ENCODE measurements at regions of chr19 and their contacts with region 1.

Region 1: GRCh38 chr19:20923077-20923871 is at the start of gene ZNF85:
- DNase-seq: peak; percentile 69 to 95 (median 92)
- ATAC-seq: peak; percentile 99
- H3K4me3 ChIP-seq: peak within 1 kb of the TSS; percentile 66
- H3K4me3 Mint-ChIP-seq: peak within 1 kb of the TSS; percentile 92 to 98 (median 95)
- H3K27ac ChIP-seq: peak within 1 kb of the TSS; percentile 63
- H3K27ac Mint-ChIP-seq: peak within 1 kb of the TSS; percentile 87 to 98 (median 93)
- H3K4me1 ChIP-seq: peaks cover 0 to 4% of the 10 kb centered on the region in 2 donors
- H3K4me1 Mint-ChIP-seq: peaks cover 4 to 28% (median 14%) of the 10 kb centered on the region in 7 donors
- H3K27me3 ChIP-seq: no peaks in the 10 kb centered on the region
- H3K27me3 Mint-ChIP-seq: no peaks in the 10 kb centered on the region
- total RNA-seq, gene ZNF85: 4.3 to 10.4 (median 7.3) TPM

Region 2: DNA sequence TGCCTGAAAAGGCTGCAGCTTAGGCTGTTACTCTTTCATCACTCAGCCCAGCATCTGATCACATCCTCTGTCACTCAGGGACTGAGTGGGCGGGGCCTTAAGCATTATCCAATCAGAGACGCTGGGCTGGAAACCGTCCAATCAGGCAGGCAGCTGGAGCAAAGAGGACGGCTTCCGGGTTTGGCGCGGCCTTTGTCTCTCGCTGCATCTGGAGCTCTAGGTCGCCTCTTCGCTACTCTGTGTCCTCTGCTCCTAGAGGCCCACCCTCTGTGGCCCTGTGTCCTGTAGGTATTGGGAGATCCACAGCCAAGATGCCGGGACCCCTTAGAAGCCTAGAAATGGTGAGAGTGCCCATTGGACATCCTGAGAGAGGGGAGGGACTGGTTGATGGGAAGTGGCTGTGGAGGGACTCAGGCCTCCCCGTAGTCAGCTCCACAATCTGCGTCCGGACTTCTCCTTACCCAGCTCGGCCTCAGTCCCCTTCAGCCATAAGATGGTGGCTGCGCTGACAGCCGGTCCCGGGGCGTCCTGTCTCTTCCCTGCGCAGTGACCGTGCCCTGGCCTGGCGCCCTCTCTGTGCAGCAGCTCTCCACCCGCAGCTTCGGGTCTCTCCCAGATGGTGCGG is 756.1 kb before region 1 on chr19 and contains the start of gene ZNF486:
- CTCF ChIA-PET with region 1: no interaction called
- POLR2A ChIA-PET with region 1: no interaction called
- intact Hi-C with region 1: loop called in 1 of 2 experiments (anchors 5 kb)
- DNase-seq: peak; percentile 73 to 94 (median 90)
- ATAC-seq: peak; percentile 99
- H3K4me3 ChIP-seq: peak within 1 kb of the TSS; percentile 85
- H3K4me3 Mint-ChIP-seq: peak within 1 kb of the TSS; percentile 90 to 99 (median 95)
- H3K27ac ChIP-seq: peak within 1 kb of the TSS; percentile 76
- H3K27ac Mint-ChIP-seq: peak within 1 kb of the TSS; percentile 83 to 98 (median 90)
- H3K4me1 ChIP-seq: peaks cover 9 to 13% of the 10 kb centered on the region in 2 donors
- H3K4me1 Mint-ChIP-seq: peaks cover 13 to 42% (median 36%) of the 10 kb centered on the region in 7 donors
- H3K27me3 ChIP-seq: no peaks in the 10 kb centered on the region
- H3K27me3 Mint-ChIP-seq: no peaks in the 10 kb centered on the region
- total RNA-seq, gene ZNF486: 3.3 to 10.3 (median 4.8) TPM

Region 3: DNA sequence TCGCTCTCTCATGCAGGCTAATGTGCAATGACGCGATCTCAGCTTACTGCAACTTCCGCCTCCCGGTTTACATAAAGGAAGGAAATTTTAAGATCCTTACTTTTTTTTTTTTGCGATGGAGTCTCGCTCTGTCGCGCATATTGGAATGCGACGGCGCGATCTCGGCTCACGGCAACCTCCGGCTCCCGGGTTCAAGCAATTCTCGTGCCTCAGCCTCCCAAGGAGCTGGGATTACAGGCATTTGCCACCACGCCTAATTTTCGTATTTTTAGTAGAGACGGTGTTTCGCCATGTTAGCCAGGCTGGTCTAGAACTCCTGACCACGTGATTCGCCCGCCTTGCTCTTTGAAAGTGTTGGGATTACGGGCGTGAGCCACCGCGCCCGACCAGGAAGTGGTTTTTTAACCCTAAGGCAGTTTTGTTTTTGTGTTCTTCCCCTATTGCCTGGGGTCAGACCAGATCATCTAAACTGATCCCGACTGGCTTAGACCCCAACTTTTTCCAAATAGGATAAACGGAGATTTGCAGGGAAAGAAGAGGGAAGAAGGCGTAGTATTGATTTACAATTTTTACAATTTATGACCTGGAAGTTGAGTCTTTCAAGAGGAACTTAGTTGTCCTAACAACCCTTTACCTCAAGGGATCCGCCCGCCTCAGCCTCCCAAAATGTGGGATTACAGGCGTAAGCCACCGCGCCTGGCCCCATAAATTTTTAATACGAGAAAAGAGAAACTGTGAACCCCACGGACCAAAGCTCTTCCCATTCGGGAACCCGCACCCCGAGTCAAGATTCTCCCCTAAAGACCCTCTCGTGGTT is 499.7 kb before region 1 on chr19:
- CTCF ChIA-PET with region 1: no interaction called
- POLR2A ChIA-PET with region 1: interaction called, 3 read pairs
- intact Hi-C with region 1: loop called in 1 of 2 experiments (anchors 1 kb)
- DNase-seq: peak in 7 of 9 donors; percentile 17 to 30 (median 24)
- ATAC-seq: no peak
- H3K4me3 ChIP-seq: peak overlapping the region; percentile 91
- H3K4me3 Mint-ChIP-seq: peak overlapping the region; percentile 89 to 98 (median 93)
- H3K27ac ChIP-seq: peak overlapping the region; percentile 72
- H3K27ac Mint-ChIP-seq: peak overlapping the region; percentile 51 to 96 (median 89)
- H3K4me1 ChIP-seq: peaks cover 0 to 3% of the 10 kb centered on the region in 2 donors
- H3K4me1 Mint-ChIP-seq: peaks cover 4 to 29% (median 16%) of the 10 kb centered on the region in 7 donors
- H3K27me3 ChIP-seq: no peaks in the 10 kb centered on the region
- H3K27me3 Mint-ChIP-seq: no peaks in the 10 kb centered on the region

Region 4: DNA sequence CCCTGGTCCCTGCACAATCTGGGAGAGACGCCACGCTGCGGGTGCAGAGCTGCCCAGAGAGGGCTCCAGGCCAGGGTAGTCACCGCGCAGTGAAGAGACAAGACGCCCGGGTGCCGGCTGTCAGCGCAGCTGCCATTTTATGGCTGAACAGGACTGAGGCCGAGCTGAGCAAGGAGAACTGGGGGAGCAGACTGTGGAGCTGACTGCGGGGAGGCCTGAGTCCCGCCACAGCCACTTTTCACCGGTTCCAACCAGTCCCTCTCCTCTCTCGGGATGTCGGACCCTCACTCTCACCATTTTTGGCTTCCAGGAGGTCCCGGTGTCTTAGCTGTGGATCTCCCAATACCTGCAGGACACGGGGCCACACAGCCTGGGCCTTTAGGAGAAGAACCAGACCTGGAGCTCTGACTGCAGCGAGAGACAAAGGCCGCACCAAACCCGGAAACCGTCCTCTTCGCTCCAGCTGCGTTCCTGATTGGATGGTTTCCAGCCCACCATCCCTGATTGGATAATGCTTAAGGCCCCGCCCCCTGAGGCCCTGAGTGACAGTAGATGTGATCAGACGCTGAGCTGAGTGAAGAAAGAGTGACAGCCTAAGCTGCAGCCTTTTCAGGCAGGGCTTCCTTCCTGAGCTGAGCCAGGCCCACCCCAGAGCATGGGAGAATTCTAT is 262.0 kb before region 1 on chr19 and contains the start of gene ZNF626:
- CTCF ChIA-PET with region 1: no interaction called
- POLR2A ChIA-PET with region 1: interaction called, 8 read pairs
- intact Hi-C with region 1: loop called in 1 of 2 experiments (anchors 1 kb)
- DNase-seq: peak; percentile 66 to 92 (median 87)
- ATAC-seq: peak; percentile 99
- H3K4me3 ChIP-seq: peak within 1 kb of the TSS; percentile 89
- H3K4me3 Mint-ChIP-seq: peak within 1 kb of the TSS; percentile 83 to 97 (median 92)
- H3K27ac ChIP-seq: peak within 1 kb of the TSS; percentile 91
- H3K27ac Mint-ChIP-seq: peak within 1 kb of the TSS; percentile 86 to 97 (median 95)
- H3K4me1 ChIP-seq: peaks cover 0 to 6% of the 10 kb centered on the region in 2 donors
- H3K4me1 Mint-ChIP-seq: peaks cover 0 to 54% (median 47%) of the 10 kb centered on the region in 7 donors
- H3K27me3 ChIP-seq: no peaks in the 10 kb centered on the region
- H3K27me3 Mint-ChIP-seq: no peaks in the 10 kb centered on the region
- total RNA-seq, gene ZNF626: 2.2 to 20.0 (median 12.4) TPM

Region 5: DNA sequence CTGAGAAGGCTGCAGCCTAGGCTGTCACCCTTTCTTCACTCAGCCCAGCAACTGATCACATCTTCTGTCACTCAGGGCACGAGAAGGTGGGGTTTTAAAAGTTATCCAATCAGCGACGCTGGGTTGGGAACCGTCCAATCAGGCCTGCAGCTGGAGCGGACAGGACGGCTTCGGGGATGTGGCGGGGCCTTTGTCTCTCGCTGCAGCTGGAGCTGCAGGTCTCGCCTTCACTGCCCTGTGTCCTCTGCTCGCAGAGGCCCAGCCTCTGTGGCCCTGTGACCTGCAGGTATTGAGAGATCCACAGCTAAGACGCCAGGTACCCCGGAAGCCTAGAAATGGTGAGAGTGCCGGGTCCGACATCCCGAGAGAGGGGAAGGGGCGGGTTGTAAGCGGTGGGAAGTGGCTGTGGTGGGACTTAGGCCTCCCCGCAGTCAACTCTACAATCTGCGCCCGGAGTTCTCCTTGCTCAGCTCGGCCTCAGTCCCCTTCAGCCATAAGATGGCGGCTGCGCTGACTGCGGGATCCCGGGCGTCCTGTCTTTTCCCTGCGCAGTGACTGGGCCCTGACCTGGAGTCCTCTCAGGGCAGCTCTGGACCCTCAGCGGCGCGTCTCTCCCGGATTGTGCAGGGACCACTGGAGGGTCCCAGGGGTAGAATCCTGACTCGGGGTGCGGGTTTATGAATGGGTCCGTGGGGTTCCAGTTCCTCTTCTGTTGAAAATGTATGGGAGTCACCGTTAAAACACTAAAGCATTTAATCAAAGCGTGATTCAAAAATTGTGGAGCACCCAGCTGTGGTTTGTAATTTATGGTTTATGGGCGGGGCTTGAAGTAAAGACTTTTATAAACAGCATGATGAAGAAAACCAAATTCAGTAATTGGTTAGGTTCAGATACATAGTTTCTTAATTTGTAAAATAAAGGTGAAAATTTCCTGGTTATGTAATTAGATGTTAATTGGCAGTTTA is 159.0 kb after region 1 on chr19 and contains the start of gene ZNF714:
- CTCF ChIA-PET with region 1: no interaction called
- POLR2A ChIA-PET with region 1: interaction called, 6 read pairs
- intact Hi-C with region 1: loop called (anchors 1 to 5 kb)
- DNase-seq: peak; percentile 55 to 90 (median 80)
- ATAC-seq: peak; percentile 100
- H3K4me3 ChIP-seq: peak within 1 kb of the TSS; percentile 92
- H3K4me3 Mint-ChIP-seq: peak within 1 kb of the TSS; percentile 91 to 100 (median 99)
- H3K27ac ChIP-seq: peak within 1 kb of the TSS; percentile 74
- H3K27ac Mint-ChIP-seq: peak within 1 kb of the TSS; percentile 85 to 99 (median 95)
- H3K4me1 ChIP-seq: no peaks in the 10 kb centered on the region
- H3K4me1 Mint-ChIP-seq: peaks cover 3 to 24% (median 18%) of the 10 kb centered on the region in 7 donors
- H3K27me3 ChIP-seq: no peaks in the 10 kb centered on the region
- H3K27me3 Mint-ChIP-seq: no peaks in the 10 kb centered on the region
- total RNA-seq, gene ZNF714: 7.4 to 22.3 (median 13.3) TPM

Region 6: DNA sequence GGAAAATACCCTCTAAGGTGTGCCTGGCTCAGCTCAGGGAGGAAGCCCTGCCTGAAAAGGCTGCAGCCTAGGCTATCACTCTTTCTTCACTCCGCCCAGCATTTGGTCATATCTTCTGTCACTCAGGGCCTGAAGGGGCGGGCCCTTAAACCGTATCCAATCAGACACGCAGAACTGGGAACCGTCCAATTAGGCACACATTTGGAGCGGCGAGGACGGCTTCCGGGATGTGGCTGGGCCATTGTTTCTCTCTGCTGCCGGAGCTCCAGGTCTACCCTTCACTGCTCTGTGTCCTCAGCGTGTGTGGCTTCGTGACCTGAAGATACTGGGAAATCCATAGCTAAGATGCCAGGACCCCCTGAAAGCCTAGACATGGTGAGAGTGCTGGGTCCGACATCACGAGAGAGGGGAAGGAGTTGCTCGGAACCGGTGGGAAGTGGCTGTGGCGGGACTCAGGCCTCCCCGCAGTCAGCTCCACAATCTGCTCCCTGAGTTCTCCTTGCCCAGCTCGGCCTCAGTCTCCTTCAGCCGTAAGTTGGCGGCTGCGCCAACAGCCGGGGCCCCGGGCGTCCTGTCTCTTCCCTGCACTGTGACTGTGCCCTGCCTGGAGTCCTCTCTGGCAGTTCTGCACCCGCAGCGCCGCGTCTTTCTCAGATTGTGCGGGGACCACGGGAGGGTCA is 473.8 kb after region 1 on chr19 and contains the start of gene ZNF493:
- CTCF ChIA-PET with region 1: no interaction called
- POLR2A ChIA-PET with region 1: no interaction called
- intact Hi-C with region 1: loop called in 1 of 2 experiments (anchors 1 kb)
- DNase-seq: peak; percentile 76 to 95 (median 91)
- ATAC-seq: peak; percentile 100
- H3K4me3 ChIP-seq: peak within 1 kb of the TSS; percentile 80
- H3K4me3 Mint-ChIP-seq: peak within 1 kb of the TSS; percentile 90 to 99 (median 97)
- H3K27ac ChIP-seq: peak within 1 kb of the TSS; percentile 77
- H3K27ac Mint-ChIP-seq: peak within 1 kb of the TSS; percentile 68 to 97 (median 92)
- H3K4me1 ChIP-seq: peaks cover 6 to 11% of the 10 kb centered on the region in 2 donors
- H3K4me1 Mint-ChIP-seq: peaks cover 19 to 48% (median 32%) of the 10 kb centered on the region in 7 donors
- H3K27me3 ChIP-seq: no peaks in the 10 kb centered on the region
- H3K27me3 Mint-ChIP-seq: peaks cover 0 to 4% (median 0%) of the 10 kb centered on the region in 5 donors
- total RNA-seq, gene ZNF493: 19.7 to 78.3 (median 34.6) TPM

Region 7: GRCh38 chr19:21851596-21852345 is 928.5 kb after region 1 on chr19:
- CTCF ChIA-PET with region 1: no interaction called
- POLR2A ChIA-PET with region 1: no interaction called
- intact Hi-C with region 1: loop called (anchors 2 kb)
- DNase-seq: peak; percentile 71 to 90 (median 88)
- ATAC-seq: peak; percentile 99
- H3K4me3 ChIP-seq: peak overlapping the region; percentile 98
- H3K4me3 Mint-ChIP-seq: peak overlapping the region; percentile 89 to 96 (median 92)
- H3K27ac ChIP-seq: peak overlapping the region; percentile 90
- H3K27ac Mint-ChIP-seq: peak overlapping the region; percentile 68 to 96 (median 92)
- H3K4me1 ChIP-seq: peaks cover 6 to 10% of the 10 kb centered on the region in 2 donors
- H3K4me1 Mint-ChIP-seq: peaks cover 8 to 34% (median 27%) of the 10 kb centered on the region in 7 donors
- H3K27me3 ChIP-seq: no peaks in the 10 kb centered on the region
- H3K27me3 Mint-ChIP-seq: peaks cover 0 to 1% (median 0%) of the 10 kb centered on the region in 5 donors